ENCODE measurements at regions of chr20 and their contacts with region 1.

Region 1: DNA sequence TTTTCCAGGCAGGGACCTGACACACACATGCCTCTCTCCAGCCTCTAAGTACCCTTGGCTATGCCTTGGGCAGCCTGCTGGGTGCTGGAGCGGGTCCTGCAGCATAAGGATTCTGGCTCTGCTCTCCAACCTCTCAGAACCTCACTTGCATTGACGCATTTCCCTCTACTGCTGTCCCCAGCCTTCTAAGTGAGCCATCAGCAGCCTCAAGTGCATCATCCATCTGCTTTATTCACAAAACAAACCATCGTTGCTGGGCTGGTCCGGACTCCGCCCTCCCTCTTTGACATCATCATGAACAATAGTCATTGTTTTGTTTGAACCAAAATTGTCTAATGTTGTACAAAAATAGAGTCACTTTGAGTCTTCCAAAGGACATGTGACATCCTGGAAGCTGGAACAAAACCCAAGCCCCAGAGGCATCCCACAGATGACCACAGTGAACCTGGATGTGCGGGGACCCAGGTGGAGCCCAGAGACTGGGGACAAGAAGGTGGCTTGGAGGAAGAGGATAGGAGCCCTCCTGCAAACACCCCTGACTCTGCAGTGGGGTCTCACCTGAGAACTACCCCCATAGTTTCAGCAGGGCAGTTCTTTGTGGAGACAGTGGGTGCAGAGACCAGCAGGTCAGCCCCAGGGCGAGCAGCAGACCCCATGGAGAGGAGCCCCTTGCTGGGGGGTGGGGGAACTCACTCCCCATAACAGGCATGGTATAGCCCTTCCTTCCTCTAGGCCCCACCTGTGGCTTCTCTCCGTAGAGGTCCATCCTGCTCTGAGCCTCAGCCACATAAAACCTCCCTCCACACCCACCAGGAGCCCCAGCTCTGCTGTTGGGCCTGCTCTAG is 230.1 kb downstream of the SYNDIG1 start:
- DNase-seq: no peak
- ATAC-seq: no peak
- H3K4me3 Mint-ChIP-seq: no peak overlapping the region
- H3K27ac Mint-ChIP-seq: no peak overlapping the region
- H3K4me1 Mint-ChIP-seq: no peaks in the 10 kb centered on the region
- H3K27me3 Mint-ChIP-seq: peaks cover 2% of the 10 kb centered on the region
- CTCF ChIP-seq: no peak

Region 2: DNA sequence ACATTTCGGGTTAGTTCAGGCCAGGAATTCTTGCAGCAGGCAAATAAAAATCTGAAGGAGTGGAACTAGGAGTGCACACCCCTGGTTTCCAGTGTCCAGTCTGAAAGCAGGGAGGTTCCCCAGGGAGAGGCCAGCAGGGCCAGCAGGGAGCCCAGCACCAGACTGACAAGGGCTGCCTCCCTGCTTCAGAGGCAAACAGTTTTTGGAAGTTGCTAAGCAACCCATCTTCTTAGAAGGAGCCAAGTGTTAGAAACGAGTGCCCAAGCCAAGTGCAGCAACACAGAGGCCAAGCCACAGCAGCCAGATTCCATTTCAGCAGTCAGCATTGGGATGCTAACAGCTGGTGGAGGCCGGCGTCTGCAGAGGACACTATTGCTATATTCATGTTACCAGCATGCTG is 51.1 kb before region 1 on chr20:
- CTCF ChIA-PET with region 1: no interaction called
- POLR2A ChIA-PET with region 1: no interaction called
- intact Hi-C with region 1: loop called (anchors 10 kb)
- DNase-seq: no peak
- ATAC-seq: no peak
- H3K4me3 Mint-ChIP-seq: no peak overlapping the region
- H3K27ac Mint-ChIP-seq: no peak overlapping the region
- H3K4me1 Mint-ChIP-seq: peaks cover 28% of the 10 kb centered on the region
- H3K27me3 Mint-ChIP-seq: peaks cover 5% of the 10 kb centered on the region
- CTCF ChIP-seq: no peak

Measured in activated B cell treated with CpG ODN at 0.5 μM for 24 hours (primary cell).